Activated T-helper 1 cell treated with anti-CD3 and anti-CD28 coated beads, Interleukin-12 subunit alpha, Interleukin-12 subunit beta, Interleukin-2, Interleukin-4 antibody, amounts not matched to agents 30 ng/mL and 10 ng/mL and 1 ng/mL, durations not matched to agents 14 hours and 24 hours and 36 hours (primary cell): ENCODE measurements at regions of chr3 and their contacts with region 1.

Region 1: GRCh38 chr3:196568246-196569002 is at the starts of genes FBXO45 and WDR53:
- DNase-seq: peak; percentile 94
- H3K4me3 Mint-ChIP-seq: peak within 1 kb of the TSS; percentile 96
- H3K27ac Mint-ChIP-seq: peak within 1 kb of the TSS; percentile 95
- H3K4me1 Mint-ChIP-seq: peaks cover 44% of the 10 kb centered on the region
- H3K27me3 Mint-ChIP-seq: no peaks in the 10 kb centered on the region
- total RNA-seq, gene FBXO45: 22.8 and 24.3 TPM in 2 replicates
- total RNA-seq, gene WDR53: 24.8 and 25.5 TPM in 2 replicates

Region 2: GRCh38 chr3:196287440-196288148 is 280.8 kb before region 1 on chr3 and contains the start of gene PCYT1A:
- intact Hi-C with region 1: loop called (anchors 1 kb)
- DNase-seq: peak; percentile 72
- H3K4me3 Mint-ChIP-seq: peak within 1 kb of the TSS; percentile 99
- H3K27ac Mint-ChIP-seq: peak within 1 kb of the TSS; percentile 95
- H3K4me1 Mint-ChIP-seq: peaks cover 44% of the 10 kb centered on the region
- H3K27me3 Mint-ChIP-seq: no peaks in the 10 kb centered on the region
- total RNA-seq, gene PCYT1A: 54.7 and 57.0 TPM in 2 replicates

Region 3: GRCh38 chr3:196528639-196529233 is 39.7 kb before region 1 on chr3:
- intact Hi-C with region 1: loop called (anchors 2 kb)
- DNase-seq: peak; percentile 76
- H3K4me3 Mint-ChIP-seq: peak overlapping the region; percentile 76
- H3K27ac Mint-ChIP-seq: peak overlapping the region; percentile 75
- H3K4me1 Mint-ChIP-seq: peaks cover 8% of the 10 kb centered on the region
- H3K27me3 Mint-ChIP-seq: peaks cover 6% of the 10 kb centered on the region

Region 4: GRCh38 chr3:196632046-196632751 is 63.8 kb after region 1 on chr3:
- intact Hi-C with region 1: loop called (anchors 1 kb)
- DNase-seq: peak; percentile 90
- H3K4me3 Mint-ChIP-seq: peak overlapping the region; percentile 86
- H3K27ac Mint-ChIP-seq: peak overlapping the region; percentile 93
- H3K4me1 Mint-ChIP-seq: peaks cover 52% of the 10 kb centered on the region
- H3K27me3 Mint-ChIP-seq: no peaks in the 10 kb centered on the region

Region 5: DNA sequence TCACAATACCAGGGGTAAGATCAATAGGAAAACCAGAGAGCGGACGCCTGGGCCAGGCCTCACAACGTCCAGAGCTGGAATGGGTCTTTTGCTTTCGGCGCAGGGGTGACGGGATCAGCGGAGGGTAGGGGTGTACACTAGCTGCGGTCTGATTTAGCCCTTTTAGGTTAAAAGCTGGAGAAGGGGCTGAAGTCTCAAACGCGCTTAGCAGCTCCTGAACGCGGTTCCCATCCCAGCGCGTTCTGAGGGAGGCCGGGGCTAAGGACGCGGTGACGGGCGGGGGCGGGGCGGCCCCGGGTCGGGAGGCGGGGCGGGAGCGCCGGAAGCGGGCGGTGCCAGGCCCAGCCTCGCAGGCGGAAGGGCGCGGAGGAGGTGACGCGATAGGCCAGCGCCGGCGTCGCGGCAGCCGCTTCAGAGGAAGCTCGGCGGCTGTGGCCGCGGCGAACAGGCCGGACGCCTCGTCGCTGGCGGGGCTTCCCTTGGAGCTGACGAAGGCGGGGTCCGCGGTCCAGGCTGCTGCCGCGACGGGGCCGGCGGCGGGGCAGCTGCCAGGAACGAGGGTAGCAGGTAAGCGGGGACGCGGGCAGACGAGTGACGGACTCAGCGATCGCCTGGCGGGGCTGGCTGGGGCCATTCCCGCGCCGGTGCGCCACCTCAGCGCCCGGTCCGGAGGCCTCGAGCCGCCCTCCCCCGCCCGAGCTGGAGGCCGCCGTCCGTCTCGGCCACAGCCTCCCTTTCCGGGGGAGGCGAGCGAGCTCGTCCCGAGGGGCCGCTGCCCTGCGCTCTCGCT is 299.3 kb after region 1 on chr3 and contains the start of gene SENP5:
- intact Hi-C with region 1: loop called (anchors 5 kb)
- DNase-seq: peak; percentile 86
- H3K4me3 Mint-ChIP-seq: peak within 1 kb of the TSS; percentile 100
- H3K27ac Mint-ChIP-seq: peak within 1 kb of the TSS; percentile 98
- H3K4me1 Mint-ChIP-seq: peaks cover 12% of the 10 kb centered on the region
- H3K27me3 Mint-ChIP-seq: peaks cover 4% of the 10 kb centered on the region
- total RNA-seq, gene SENP5: 45.3 and 50.7 TPM in 2 replicates

Region 6: GRCh38 chr3:196969660-196970546 is 401.5 kb after region 1 on chr3:
- intact Hi-C with region 1: loop called (anchors 1 kb)
- DNase-seq: peak; percentile 67
- H3K4me3 Mint-ChIP-seq: peak overlapping the region; percentile 86
- H3K27ac Mint-ChIP-seq: peak overlapping the region; percentile 86
- H3K4me1 Mint-ChIP-seq: peaks cover 17% of the 10 kb centered on the region
- H3K27me3 Mint-ChIP-seq: peaks cover 11% of the 10 kb centered on the region

Region 7: DNA sequence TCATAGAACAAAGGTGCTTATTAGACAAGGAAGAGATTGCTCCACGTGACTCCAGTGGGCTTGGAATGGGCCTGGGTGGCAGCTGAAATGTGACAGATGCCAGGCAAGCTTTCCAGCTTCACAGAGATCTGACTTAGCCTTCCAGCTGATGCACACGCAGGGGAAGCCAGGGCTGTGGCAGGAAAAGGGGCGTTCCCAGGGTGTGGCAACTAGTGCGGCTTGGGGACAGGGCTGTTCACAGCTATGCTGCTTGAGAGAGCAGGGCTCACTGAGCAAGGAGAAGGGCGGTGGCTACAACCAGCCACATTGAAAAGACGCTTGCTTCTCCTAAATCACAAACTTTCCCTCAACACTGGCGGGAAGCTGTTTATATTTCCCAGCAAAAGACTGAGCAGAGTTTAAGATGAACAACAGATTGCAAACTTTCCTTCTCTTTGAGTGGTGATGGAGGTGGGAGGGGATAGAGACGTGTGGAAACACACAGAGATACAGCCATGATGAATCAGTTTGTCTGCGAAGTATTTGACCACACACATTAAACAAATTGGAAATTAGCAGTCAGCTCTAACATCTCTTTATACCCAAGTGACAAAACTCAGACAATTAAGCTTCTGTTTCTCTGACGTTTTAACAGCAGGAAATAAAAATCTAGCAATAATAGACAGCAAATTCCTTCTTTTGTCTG is 859.8 kb after region 1 on chr3:
- intact Hi-C with region 1: no loop called
- DNase-seq: peak; percentile 59
- H3K4me3 Mint-ChIP-seq: peak overlapping the region; percentile 68
- H3K27ac Mint-ChIP-seq: peak overlapping the region; percentile 78
- H3K4me1 Mint-ChIP-seq: peaks cover 52% of the 10 kb centered on the region
- H3K27me3 Mint-ChIP-seq: peaks cover 18% of the 10 kb centered on the region